Activated B cell treated with CpG ODN at 0.5 μM for 24 hours (primary cell): ENCODE measurements at regions of chr20 and their contacts with region 1.

Region 1: GRCh38 chr20:13717631-13718044 is 67.1 kb downstream of the ESF1 start:
- DNase-seq: no peak
- ATAC-seq: no peak
- H3K4me3 Mint-ChIP-seq: no peak overlapping the region
- H3K27ac Mint-ChIP-seq: no peak overlapping the region
- H3K4me1 Mint-ChIP-seq: no peaks in the 10 kb centered on the region
- H3K27me3 Mint-ChIP-seq: no peaks in the 10 kb centered on the region
- CTCF ChIP-seq: no peak

Region 2: DNA sequence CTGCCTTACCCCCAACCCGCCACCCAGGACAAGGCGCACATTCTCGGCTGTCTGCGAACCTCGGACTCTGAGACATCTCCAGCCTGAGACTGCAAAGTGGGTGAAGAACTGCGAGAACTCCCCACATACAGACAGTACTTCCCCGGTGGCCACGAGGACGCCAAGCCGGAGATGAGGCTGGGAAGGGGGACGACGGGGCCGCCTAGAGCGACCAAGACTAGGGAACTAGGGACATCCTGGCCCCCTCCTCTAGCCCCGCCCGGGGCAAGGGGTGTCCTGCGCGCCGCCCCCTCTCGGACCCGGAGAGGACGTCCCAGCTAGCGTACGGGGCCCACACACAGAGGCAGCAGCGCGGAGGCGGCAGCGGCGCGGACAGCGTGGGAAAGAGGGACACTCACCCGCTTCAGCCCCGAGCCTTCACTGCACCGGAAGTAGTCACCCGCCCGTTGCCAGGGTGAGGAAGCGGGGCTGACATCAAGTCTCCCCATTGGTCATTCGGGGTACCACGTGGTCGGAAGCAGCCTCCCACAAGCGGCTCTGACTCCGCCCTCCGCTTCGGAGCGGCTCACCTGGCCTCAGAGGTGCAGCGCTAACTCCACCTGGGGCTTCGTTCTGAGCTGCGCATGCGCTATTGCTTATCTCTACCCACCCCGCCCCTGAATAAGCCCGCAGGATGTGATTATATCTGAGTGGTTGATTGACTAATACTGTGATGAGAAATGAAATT is 79.0 kb before region 1 on chr20 and contains the start of gene TASP1:
- CTCF ChIA-PET with region 1: no interaction called
- POLR2A ChIA-PET with region 1: no interaction called
- intact Hi-C with region 1: loop called (anchors 5 kb)
- DNase-seq: peak; percentile 87
- ATAC-seq: peak; percentile 97
- H3K4me3 Mint-ChIP-seq: peak within 1 kb of the TSS; percentile 90
- H3K27ac Mint-ChIP-seq: peak within 1 kb of the TSS; percentile 87
- H3K4me1 Mint-ChIP-seq: peaks cover 14% of the 10 kb centered on the region
- H3K27me3 Mint-ChIP-seq: peaks cover 18% of the 10 kb centered on the region
- CTCF ChIP-seq: no peak
- total RNA-seq, gene TASP1: 17.6 and 20.6 TPM in 2 replicates

Region 3: GRCh38 chr20:13684566-13685222 is 32.9 kb before region 1 on chr20:
- CTCF ChIA-PET with region 1: no interaction called
- POLR2A ChIA-PET with region 1: no interaction called
- intact Hi-C with region 1: loop called (anchors 1 kb)
- DNase-seq: peak; percentile 16
- ATAC-seq: peak; percentile 21
- H3K4me3 Mint-ChIP-seq: peak overlapping the region; percentile 41
- H3K27ac Mint-ChIP-seq: peak overlapping the region; percentile 68
- H3K4me1 Mint-ChIP-seq: peaks cover 32% of the 10 kb centered on the region
- H3K27me3 Mint-ChIP-seq: no peaks in the 10 kb centered on the region
- CTCF ChIP-seq: no peak

Region 4: DNA sequence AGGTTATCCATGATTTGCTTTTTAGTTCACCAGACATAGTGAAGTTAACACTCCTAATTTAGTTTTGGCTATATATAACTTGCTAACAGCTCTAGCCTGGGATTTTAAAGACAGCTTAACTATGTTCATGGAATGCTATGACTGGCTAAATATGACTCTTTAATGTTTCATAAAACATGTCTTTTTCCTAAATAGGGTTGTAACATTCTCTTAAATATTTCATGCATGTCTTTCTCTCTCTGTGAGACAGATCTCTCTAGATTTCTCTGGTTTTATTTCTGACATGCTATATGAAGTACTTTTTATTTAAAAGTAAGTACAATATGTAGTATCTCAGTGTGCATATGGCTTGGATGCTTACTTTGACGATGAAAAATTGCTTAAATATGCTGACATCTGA is 313.4 kb after region 1 on chr20:
- CTCF ChIA-PET with region 1: no interaction called
- POLR2A ChIA-PET with region 1: no interaction called
- intact Hi-C with region 1: no loop called
- DNase-seq: no peak
- ATAC-seq: no peak
- H3K4me3 Mint-ChIP-seq: no peak overlapping the region
- H3K27ac Mint-ChIP-seq: no peak overlapping the region
- H3K4me1 Mint-ChIP-seq: no peaks in the 10 kb centered on the region
- H3K27me3 Mint-ChIP-seq: no peaks in the 10 kb centered on the region
- CTCF ChIP-seq: no peak

Region 5: GRCh38 chr20:14055127-14055742 is 337.6 kb after region 1 on chr20:
- CTCF ChIA-PET with region 1: no interaction called
- POLR2A ChIA-PET with region 1: no interaction called
- intact Hi-C with region 1: no loop called
- DNase-seq: no peak
- ATAC-seq: peak; percentile 31
- H3K4me3 Mint-ChIP-seq: no peak overlapping the region
- H3K27ac Mint-ChIP-seq: no peak overlapping the region
- H3K4me1 Mint-ChIP-seq: no peaks in the 10 kb centered on the region
- H3K27me3 Mint-ChIP-seq: peaks cover 2% of the 10 kb centered on the region
- CTCF ChIP-seq: peak; percentile 64